Activated CD8-positive, alpha-beta T cell treated with anti-CD3 and anti-CD28 coated beads for 36 hours (primary cell): ENCODE measurements at regions of chr5 and their contacts with region 1.

Region 1: DNA sequence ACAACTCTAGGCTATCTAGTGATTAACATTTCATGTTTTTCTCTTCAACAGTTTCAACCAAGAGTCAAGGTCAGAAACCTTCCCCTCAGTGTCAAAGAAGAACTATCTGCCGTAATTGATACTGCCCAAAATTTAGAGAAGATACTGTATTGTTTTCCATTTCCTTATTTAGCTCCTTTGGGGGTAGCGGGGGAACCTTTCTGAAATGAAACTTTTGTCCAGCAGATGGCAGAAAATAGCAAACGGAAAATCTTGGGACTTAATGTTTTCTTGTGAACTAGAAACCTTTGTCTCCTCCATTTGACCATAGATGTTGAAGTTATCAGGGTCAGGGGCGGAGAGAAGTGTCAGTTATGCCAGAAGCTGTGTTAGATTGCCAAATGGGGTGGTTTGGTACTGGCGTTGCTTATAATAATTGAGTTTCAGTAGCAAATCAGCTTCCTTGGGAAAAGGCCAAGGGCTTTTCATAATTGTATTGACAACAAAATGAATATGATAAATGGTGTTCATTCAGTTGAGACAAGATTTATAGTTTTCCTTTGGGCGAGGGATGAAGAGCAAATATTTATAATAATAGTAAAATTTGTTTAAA is 101.7 kb upstream of the TLX3 start:
- DNase-seq: peak; percentile 28
- ATAC-seq: no peak
- H3K4me3 Mint-ChIP-seq: no peak overlapping the region
- H3K27ac Mint-ChIP-seq: no peak overlapping the region
- H3K4me1 Mint-ChIP-seq: no peaks in the 10 kb centered on the region
- H3K27me3 Mint-ChIP-seq: peaks cover 2% of the 10 kb centered on the region
- CTCF ChIP-seq: peak; percentile 71

Region 2: GRCh38 chr5:171221941-171222340 is 14.6 kb after region 1 on chr5:
- CTCF ChIA-PET with region 1: interaction called, 13 read pairs
- POLR2A ChIA-PET with region 1: no interaction called
- intact Hi-C with region 1: no loop called
- DNase-seq: no peak
- ATAC-seq: no peak
- H3K4me3 Mint-ChIP-seq: no peak overlapping the region
- H3K27ac Mint-ChIP-seq: no peak overlapping the region
- H3K4me1 Mint-ChIP-seq: no peaks in the 10 kb centered on the region
- H3K27me3 Mint-ChIP-seq: peaks cover 9% of the 10 kb centered on the region
- CTCF ChIP-seq: no peak

Region 3: DNA sequence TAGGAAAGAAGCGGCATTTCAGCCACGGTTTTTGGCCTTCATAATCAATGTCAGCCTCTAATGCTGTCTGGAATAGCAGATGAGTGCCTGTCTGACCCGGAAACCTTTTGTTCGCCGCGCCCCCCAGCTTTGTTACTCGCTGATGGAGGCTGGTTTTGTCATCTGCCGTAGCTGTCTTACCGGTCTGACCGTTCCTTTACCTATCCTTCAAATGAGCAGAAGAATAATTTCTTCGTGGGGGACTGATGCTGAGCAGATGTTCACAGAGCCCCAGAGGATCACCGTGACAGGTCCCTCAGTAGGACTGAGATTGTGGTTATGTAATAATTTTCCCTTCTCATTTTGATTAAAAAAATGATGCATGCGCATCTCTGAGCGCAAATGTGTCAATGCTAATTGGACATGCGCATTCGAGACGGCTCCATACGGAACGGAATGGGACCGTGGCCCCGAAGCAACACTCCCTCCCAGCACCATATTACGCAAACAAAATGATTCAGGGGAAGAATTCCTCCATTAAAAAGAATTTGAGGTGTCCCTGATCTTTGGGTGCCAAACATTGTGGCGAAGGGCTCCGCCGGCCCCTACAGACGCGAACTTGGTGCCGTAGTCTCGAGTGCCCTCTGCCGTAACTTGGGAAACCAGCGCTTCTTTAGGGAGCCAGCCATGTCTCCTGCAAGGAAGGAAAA is 129.3 kb after region 1 on chr5:
- CTCF ChIA-PET with region 1: interaction called, 36 read pairs
- POLR2A ChIA-PET with region 1: no interaction called
- intact Hi-C with region 1: loop called (anchors 1 kb)
- DNase-seq: peak; percentile 51
- ATAC-seq: peak; percentile 65
- H3K4me3 Mint-ChIP-seq: peak overlapping the region; percentile 55
- H3K27ac Mint-ChIP-seq: no peak overlapping the region
- H3K4me1 Mint-ChIP-seq: peaks cover 10% of the 10 kb centered on the region
- H3K27me3 Mint-ChIP-seq: peaks cover 32% of the 10 kb centered on the region
- CTCF ChIP-seq: peak; percentile 36

Region 4: DNA sequence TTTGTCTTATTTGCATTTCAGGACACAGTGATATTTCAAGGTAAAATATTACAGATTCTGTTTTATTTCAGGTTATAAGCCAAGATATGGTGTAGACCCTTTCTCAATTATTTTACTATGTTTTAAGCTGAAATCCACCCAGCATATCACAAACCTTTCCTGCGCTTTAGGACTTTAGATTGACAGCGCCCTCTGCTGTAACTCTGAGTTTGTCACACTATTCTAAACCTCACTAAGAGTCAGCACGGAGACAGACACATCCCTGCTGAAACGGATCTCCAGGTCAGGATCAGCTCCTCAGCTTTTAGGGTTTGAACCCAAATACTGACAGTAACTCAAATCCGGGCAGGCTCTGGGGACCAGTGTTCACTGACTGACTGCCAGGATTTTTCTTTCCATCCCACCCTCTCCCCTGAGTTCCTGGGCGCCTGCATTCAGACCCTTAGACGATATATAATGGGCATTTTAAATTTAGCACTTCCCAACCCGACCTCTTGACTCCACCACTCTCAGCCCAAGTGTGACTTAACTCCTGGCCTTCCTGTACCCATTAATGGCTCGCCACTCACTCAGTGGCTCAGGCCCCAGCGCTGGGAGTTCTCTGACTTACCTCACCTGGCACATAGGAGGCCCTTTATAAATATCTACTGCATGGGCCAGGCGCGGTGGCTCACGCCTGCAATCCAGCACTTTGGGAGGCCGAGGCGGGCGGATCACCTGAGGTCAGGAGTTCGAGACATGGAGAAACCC is 135.2 kb after region 1 on chr5:
- CTCF ChIA-PET with region 1: interaction called, 36 read pairs
- POLR2A ChIA-PET with region 1: no interaction called
- intact Hi-C with region 1: loop called (anchors 1 kb)
- DNase-seq: peak; percentile 64
- ATAC-seq: peak; percentile 49
- H3K4me3 Mint-ChIP-seq: no peak overlapping the region
- H3K27ac Mint-ChIP-seq: no peak overlapping the region
- H3K4me1 Mint-ChIP-seq: no peaks in the 10 kb centered on the region
- H3K27me3 Mint-ChIP-seq: peaks cover 15% of the 10 kb centered on the region
- CTCF ChIP-seq: peak; percentile 63